ENCODE measurements at regions of chr11 and their contacts with region 1.

Region 1: DNA sequence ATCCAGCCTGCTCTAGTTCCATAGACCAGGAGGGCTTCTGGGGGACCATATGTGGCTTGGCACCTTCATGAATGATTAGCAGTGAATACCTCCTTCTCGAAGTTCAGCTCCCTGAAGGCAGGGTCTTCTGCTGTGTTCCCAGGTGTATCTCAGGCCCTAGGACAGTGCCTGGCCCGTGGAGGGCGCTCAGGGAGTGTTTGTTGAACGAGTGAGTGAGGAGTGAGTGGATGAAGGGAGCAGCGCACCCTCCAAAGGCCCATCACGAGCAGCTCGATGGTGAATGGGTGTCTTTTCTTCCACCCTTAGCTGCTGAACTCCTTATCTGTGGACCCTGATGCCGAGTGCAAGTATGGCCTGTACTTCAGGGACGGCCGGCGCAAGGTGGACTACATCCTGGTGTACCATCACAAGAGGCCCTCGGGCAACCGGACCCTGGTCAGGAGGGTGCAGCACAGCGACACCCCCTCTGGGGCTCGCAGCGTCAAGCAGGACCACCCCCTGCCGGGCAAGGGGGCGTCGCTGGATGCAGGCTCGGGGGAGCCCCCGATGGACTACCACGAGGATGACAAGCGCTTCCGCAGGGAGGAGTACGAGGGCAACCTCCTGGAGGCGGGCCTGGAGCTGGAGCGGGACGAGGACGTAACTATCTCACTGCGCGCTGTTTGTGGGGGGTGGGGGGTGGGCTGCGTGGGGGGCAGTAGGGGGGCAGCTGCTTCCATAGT is 9.5 kb downstream of the ANO1 start:
- DNase-seq: no peak
- ATAC-seq: no peak
- H3K4me3 Mint-ChIP-seq: no peak overlapping the region
- H3K27ac Mint-ChIP-seq: no peak overlapping the region
- H3K4me1 Mint-ChIP-seq: no peaks in the 10 kb centered on the region
- H3K27me3 Mint-ChIP-seq: peaks cover 4% of the 10 kb centered on the region
- CTCF ChIP-seq: no peak

Region 2: GRCh38 chr11:69554894-69555293 is 532.7 kb before region 1 on chr11:
- CTCF ChIA-PET with region 1: no interaction called
- POLR2A ChIA-PET with region 1: interaction called, 10 read pairs
- intact Hi-C with region 1: no loop called
- DNase-seq: no peak
- ATAC-seq: no peak
- H3K4me3 Mint-ChIP-seq: no peak overlapping the region
- H3K27ac Mint-ChIP-seq: no peak overlapping the region
- H3K4me1 Mint-ChIP-seq: no peaks in the 10 kb centered on the region
- H3K27me3 Mint-ChIP-seq: no peaks in the 10 kb centered on the region
- CTCF ChIP-seq: no peak

Region 3: DNA sequence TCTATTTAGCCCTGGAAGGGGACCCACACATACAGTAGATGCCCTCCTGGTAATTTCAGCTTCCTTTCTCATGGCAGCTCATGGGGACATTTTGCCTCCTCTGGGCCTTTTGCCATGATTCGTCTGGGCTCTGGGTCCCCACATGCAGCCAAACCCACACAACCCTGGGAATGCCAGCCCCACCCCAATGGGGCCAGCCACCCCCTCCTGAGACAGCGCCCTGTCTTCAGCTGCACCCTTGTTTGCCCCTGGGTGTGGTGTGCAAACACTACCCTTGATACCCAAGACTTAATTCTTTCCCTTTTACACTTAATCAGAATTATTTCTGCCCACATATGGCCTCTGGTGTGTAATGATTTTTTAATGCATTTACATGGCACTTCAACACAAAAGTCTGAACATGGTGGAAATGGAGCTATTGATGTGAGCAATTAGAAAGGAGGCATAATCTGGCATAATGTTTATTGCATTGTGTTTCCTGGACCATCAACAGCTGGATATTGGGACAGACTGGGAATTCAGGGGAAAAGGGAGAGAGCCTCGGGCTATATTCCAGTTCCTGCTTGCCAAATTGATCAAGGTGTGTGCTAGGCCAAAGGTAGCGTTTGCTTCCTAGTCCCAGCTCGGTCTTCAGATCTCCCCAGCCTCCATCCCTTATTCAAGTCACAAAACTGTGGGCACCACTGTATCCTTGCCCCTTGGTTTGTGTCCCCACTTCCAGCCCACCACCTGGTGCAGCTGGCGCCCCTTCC is 94.5 kb before region 1 on chr11:
- CTCF ChIA-PET with region 1: no interaction called
- POLR2A ChIA-PET with region 1: no interaction called
- intact Hi-C with region 1: no loop called
- DNase-seq: no peak
- ATAC-seq: no peak
- H3K4me3 Mint-ChIP-seq: no peak overlapping the region
- H3K27ac Mint-ChIP-seq: no peak overlapping the region
- H3K4me1 Mint-ChIP-seq: no peaks in the 10 kb centered on the region
- H3K27me3 Mint-ChIP-seq: peaks cover 18% of the 10 kb centered on the region
- CTCF ChIP-seq: no peak

Region 4: DNA sequence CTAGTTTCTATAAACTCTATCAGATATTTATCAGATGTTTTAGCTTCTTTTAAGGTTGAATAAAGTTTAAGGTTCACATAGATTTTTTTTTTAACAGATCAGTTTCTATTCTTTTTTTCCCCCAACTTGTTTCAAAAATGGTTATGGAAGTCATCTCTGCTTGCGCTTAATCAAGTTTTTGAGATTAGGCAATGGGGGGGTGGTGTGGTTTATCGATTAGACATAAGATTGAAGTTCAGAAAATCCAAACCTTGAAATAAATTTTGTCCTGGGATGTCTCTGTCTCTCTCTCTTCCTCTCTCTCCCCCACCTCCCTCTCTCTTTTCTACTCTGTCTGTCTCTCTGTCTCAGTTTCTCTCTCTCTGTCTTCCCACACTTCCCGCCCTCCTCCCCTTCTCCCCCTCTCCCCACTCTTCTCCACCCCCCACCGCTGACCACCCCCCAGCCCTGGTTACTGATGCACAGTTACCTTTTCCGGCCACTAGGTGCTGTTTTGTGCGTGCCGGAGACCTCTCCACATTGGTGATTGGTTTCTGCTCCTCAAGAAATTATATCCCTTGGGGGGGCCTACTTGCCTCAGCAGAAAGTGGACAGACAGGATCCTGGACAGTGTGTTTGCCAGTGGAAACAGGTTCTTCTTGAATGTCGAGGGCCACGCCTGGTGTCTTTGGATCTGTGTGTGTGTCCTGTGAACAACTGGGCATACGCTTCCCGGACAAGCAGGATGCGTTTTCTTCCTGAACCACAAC is 39.2 kb before region 1 on chr11:
- CTCF ChIA-PET with region 1: no interaction called
- POLR2A ChIA-PET with region 1: no interaction called
- intact Hi-C with region 1: no loop called
- DNase-seq: no peak
- ATAC-seq: no peak
- H3K4me3 Mint-ChIP-seq: no peak overlapping the region
- H3K27ac Mint-ChIP-seq: no peak overlapping the region
- H3K4me1 Mint-ChIP-seq: no peaks in the 10 kb centered on the region
- H3K27me3 Mint-ChIP-seq: peaks cover 22% of the 10 kb centered on the region
- CTCF ChIP-seq: no peak

Region 5: DNA sequence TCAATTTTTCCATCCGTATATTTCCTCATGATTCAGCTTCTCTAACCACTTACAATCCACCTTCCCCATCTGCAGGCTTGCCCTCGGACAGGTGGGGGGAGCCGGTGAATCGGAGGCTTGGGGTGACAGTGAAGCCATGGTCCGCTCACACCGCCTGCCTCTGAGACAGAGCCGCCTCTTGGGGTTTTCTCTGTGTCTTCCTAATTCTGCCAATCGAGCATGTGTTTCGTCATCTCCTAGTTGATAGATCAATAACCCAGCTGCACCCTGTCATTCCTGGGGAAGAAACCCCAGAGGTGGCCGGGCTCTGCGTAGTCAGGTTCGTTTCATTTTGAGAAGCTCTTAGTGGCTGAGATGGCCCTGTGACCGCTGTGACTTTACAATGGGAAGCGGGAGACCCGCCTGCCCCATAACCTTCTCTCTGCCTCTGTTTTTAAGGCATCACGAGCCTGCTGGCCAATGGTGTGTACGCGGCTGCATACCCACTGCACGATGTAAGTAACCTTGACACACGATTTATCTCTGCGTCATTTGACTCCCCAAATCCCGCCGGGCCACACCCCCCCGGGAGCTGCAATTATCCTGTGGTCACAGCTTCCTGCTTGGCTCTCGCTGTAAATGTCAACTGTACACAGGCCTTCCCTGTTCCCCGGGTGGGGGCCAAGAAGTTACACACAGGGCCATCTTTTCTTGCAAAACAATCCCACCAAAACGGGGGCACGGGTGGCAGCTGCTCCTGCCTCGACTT is 23.8 kb after region 1 on chr11:
- CTCF ChIA-PET with region 1: no interaction called
- POLR2A ChIA-PET with region 1: no interaction called
- intact Hi-C with region 1: no loop called
- DNase-seq: no peak
- ATAC-seq: no peak
- H3K4me3 Mint-ChIP-seq: no peak overlapping the region
- H3K27ac Mint-ChIP-seq: no peak overlapping the region
- H3K4me1 Mint-ChIP-seq: no peaks in the 10 kb centered on the region
- H3K27me3 Mint-ChIP-seq: peaks cover 5% of the 10 kb centered on the region
- CTCF ChIP-seq: no peak

Measured in activated B cell treated with CpG ODN at 0.5 μM for 24 hours (primary cell).